ENCODE measurements at regions of chr3 and their contacts with region 1.

Region 1: DNA sequence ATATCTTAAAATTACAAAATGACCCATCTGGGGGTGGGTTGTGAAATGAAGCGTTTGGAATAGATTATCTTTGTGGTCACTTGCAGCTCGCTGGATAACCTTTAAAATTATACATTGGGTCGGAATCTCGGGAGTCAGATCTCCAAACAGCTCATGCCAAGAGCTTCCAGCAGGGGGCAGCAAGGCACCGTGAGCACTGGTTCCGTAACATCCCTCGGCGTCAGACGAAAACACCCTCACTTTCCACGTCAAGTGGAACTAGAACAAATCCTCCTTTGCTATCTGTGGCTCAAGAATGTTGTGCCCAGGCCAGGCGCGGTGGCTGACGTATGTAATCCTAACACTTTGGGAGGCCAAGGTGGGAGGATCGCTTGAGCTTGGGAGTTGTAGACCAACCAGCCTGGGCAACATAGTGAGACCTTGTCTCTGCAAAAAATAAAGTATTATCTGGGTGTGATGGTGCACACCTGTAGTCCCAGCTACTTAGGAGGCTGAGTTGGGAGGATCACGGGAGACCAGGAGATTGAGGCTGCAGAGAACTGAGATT is 31.1 kb downstream of the UMPS start:
- DNase-seq: peak; percentile 64 to 73 (median 70)
- H3K4me3 ChIP-seq: peak overlapping the region in 1 of 3 experiments; percentile 40
- H3K4me3 Mint-ChIP-seq: peak overlapping the region in 1 of 2 donors; percentile 84
- H3K27ac ChIP-seq: no peak overlapping the region
- H3K27ac Mint-ChIP-seq: no peak overlapping the region
- H3K4me1 ChIP-seq: peaks cover 3 to 7% of the 10 kb centered on the region in 2 donors
- H3K4me1 Mint-ChIP-seq: peaks cover 5% of the 10 kb centered on the region
- H3K27me3 ChIP-seq: no peaks in the 10 kb centered on the region
- H3K27me3 Mint-ChIP-seq: peaks cover 1 to 4% (median 4%) of the 10 kb centered on the region in 3 donors
- CTCF ChIP-seq: peak; percentile 92

Region 2: DNA sequence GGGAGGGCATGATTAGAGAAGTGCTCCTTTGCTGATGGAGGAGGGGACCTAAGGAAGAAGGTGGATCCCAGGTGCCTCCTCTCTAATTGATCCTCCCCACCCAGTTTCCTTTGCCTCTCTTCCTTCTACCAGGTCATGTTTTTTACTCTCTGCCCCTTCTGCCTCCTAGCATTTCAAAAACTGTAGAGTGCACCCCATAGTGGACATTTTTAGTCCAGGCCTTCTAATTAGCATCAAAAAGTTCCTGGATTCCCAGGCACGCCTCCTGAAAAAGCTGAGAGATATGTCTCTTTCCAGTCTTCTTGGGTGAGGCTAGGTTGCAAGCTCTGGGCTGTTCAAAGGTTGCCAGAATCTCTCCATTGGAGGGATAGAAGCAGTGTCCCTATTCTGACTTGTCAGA is 144.5 kb after region 1 on chr3:
- intact Hi-C with region 1: loop called (anchors 1 to 2 kb)
- DNase-seq: no peak
- H3K4me3 ChIP-seq: no peak overlapping the region
- H3K4me3 Mint-ChIP-seq: no peak overlapping the region
- H3K27ac ChIP-seq: no peak overlapping the region
- H3K27ac Mint-ChIP-seq: no peak overlapping the region
- H3K4me1 ChIP-seq: peaks cover 0 to 5% of the 10 kb centered on the region in 2 donors
- H3K4me1 Mint-ChIP-seq: peaks cover 2% of the 10 kb centered on the region
- H3K27me3 ChIP-seq: no peaks in the 10 kb centered on the region
- H3K27me3 Mint-ChIP-seq: peaks cover 3 to 15% (median 6%) of the 10 kb centered on the region in 3 donors
- CTCF ChIP-seq: no peak

Measured in CD14-positive monocyte (primary cell).